Common myeloid progenitor, CD34-positive (primary cell): ENCODE measurements at regions of chr15 and their contacts with region 1.

Region 1: GRCh38 chr15:85504749-85505676 is 124.6 kb downstream of the AKAP13 start:
- DNase-seq: peak; percentile 62 to 79 (median 77)
- H3K4me3 ChIP-seq: no peak overlapping the region
- H3K27ac ChIP-seq: no peak overlapping the region
- H3K4me1 ChIP-seq: peaks cover 0 to 3% (median 1%) of the 10 kb centered on the region in 4 experiments
- H3K27me3 ChIP-seq: no peaks in the 10 kb centered on the region

Region 2: DNA sequence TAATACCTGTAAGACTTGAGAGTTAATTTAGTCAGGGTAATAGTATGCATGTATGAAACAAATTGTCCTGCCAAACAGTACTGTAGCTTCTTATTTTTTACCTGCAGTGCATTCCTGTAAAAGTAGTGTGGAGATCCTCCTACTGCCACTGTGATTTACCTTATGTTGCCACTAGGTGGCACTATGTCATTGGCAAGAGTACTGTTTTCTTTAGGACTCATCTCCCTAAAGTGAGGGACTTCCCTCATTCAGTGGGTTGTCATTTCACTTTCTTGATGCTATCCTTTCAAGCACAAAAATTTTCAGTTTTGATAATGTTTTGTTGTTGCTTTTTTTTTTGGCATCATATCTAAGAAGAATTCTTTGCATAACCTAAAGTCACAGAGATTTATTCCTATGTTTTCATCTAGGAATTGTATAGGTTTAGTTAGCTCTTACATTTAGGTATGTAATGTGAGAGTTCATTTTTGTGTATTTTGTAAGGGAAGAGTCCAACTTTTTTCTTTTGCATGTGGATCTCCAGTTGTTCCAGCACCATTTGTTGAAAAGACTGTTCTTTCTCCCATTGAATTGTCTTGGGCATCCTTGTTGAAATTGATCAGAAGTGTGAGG is 19.0 kb before region 1 on chr15:
- CTCF ChIA-PET with region 1: interaction called, 64 read pairs
- POLR2A ChIA-PET with region 1: no interaction called
- DNase-seq: peak; percentile 76 to 88 (median 81)
- H3K4me3 ChIP-seq: no peak overlapping the region
- H3K27ac ChIP-seq: no peak overlapping the region
- H3K4me1 ChIP-seq: peaks cover 5 to 46% (median 16%) of the 10 kb centered on the region in 4 experiments
- H3K27me3 ChIP-seq: no peaks in the 10 kb centered on the region

Region 3: GRCh38 chr15:85636351-85636750 is 131.3 kb after region 1 on chr15:
- CTCF ChIA-PET with region 1: no interaction called
- POLR2A ChIA-PET with region 1: no interaction called
- DNase-seq: no peak
- H3K4me3 ChIP-seq: no peak overlapping the region
- H3K27ac ChIP-seq: no peak overlapping the region
- H3K4me1 ChIP-seq: peaks cover 0 to 15% (median 0%) of the 10 kb centered on the region in 4 experiments
- H3K27me3 ChIP-seq: no peaks in the 10 kb centered on the region

Region 4: GRCh38 chr15:86201313-86202008 is 696.4 kb after region 1 on chr15:
- CTCF ChIA-PET with region 1: no interaction called
- POLR2A ChIA-PET with region 1: no interaction called
- DNase-seq: no peak
- H3K4me3 ChIP-seq: no peak overlapping the region
- H3K27ac ChIP-seq: no peak overlapping the region
- H3K4me1 ChIP-seq: no peaks in the 10 kb centered on the region
- H3K27me3 ChIP-seq: peaks cover 0 to 2% (median 0%) of the 10 kb centered on the region in 5 experiments